Naive thymus-derived CD4-positive, alpha-beta T cell (primary cell): ENCODE measurements at regions of chr9 and their contacts with region 1.

Region 1: GRCh38 chr9:122498883-122499288 is 11.7 kb upstream of the OR1J2 start:
- DNase-seq: peak in 5 of 9 donors; percentile 2 to 28 (median 4)
- ATAC-seq: peak; percentile 54
- H3K4me3 ChIP-seq: no peak overlapping the region
- H3K4me3 Mint-ChIP-seq: no peak overlapping the region
- H3K27ac ChIP-seq: no peak overlapping the region
- H3K27ac Mint-ChIP-seq: no peak overlapping the region
- H3K4me1 ChIP-seq: no peaks in the 10 kb centered on the region
- H3K4me1 Mint-ChIP-seq: no peaks in the 10 kb centered on the region
- H3K27me3 ChIP-seq: no peaks in the 10 kb centered on the region
- H3K27me3 Mint-ChIP-seq: peaks cover 14 to 47% (median 24%) of the 10 kb centered on the region in 5 donors

Region 2: DNA sequence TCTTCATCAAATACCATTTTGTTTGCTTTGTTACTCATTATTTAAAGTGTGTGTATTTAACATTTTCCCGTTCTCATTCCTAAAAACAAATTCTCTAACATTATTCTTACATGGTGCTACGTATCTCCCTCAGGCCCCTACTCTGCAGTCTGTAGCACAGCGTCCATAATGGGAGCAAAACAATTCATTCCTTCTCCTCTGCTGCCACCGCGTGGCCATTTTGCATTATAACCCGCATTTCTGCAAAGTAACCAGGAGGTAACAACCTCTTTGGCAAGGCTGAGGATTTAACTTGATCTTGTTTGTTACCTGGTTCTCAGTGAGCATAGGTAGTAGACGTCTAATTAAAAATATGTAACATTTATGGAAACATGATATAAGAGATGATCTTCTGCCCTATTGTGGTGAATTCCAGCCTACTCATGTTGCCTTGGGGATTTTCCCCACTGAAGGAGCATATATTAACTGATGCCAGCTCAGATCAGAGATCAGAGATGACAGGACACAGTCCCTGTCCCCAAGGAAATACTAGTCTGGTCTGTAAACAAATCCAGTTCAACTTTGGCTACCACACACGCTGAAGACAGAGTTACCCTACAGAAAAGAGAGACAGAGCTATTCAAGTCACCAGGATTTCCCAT is 311.5 kb after region 1 on chr9:
- CTCF ChIA-PET with region 1: interaction called, 3 read pairs
- POLR2A ChIA-PET with region 1: no interaction called
- intact Hi-C with region 1: loop called (anchors 1 kb)
- DNase-seq: peak; percentile 52 to 79 (median 72)
- ATAC-seq: peak; percentile 95
- H3K4me3 ChIP-seq: no peak overlapping the region
- H3K4me3 Mint-ChIP-seq: no peak overlapping the region
- H3K27ac ChIP-seq: no peak overlapping the region
- H3K27ac Mint-ChIP-seq: no peak overlapping the region
- H3K4me1 ChIP-seq: peaks cover 0 to under 1% of the 10 kb centered on the region in 2 donors
- H3K4me1 Mint-ChIP-seq: peaks cover 9 to 24% (median 16%) of the 10 kb centered on the region in 7 donors
- H3K27me3 ChIP-seq: no peaks in the 10 kb centered on the region
- H3K27me3 Mint-ChIP-seq: no peaks in the 10 kb centered on the region